Motor neuron (in vitro differentiated cells): ENCODE measurements at regions of chr12 and their contacts with region 1.

Region 1: DNA sequence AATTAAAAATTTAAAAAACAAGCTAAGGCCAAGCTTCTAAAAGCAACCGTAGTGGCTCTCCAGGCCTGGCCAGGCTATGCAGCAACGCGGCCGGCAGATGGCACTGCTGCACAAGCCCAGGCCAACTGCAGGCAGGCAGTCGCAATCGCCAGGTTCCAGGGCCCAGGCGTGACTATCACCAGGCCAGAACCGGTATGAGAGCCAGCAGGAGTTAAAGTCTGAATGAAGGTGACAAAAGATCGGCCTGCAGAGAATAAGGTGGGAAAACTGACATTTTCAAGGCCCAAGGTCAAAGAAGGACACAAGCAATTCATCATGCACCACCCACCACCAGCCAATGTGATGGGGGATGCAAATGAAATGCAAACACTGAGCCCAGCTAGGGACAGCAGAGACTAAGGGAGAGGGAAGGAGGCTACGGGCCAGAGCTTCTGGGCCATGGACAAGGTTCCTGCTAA is 43.6 kb upstream of the ANO2 start:
- ATAC-seq: peak; percentile 97 to 100 (median 99)
- H3K4me3 ChIP-seq: no peak overlapping the region
- H3K27ac ChIP-seq: no peak overlapping the region
- H3K4me1 ChIP-seq: peaks cover 0 to 9% of the 10 kb centered on the region in 2 donors

Region 2: DNA sequence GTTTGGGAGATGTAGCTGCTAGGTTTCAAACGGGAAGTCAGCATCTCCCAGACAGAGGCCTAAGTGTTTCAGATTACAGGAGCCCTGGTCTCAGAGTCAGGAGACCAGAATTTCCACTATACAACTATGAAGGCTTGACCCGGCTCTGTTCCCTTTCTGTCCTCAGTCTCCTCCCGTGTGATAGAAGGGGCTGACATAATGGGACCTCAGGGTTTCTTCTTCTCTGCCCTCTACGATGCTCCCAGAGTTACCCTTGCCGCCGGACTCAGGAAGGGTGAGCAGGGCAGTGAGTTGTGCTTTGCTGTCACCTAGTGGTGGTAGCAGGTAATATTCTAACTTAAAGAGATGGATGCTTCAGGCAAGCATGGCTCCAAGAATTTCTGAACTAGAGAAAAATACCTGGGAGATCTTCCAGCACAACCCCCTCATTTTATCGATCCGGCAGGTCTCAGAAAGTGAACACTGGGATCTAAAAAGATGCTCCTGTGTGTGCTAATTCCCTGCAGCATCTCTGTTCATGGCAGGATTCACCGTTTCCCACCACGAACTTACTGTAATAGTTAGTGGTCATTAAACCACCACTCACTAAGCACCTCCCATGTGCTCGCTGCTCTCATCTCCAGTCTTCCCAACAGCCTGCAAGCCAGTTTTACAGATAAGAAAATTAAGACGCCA is 51.3 kb after region 1 on chr12:
- in situ Hi-C with region 1: loop called in 1 of 9 experiments (anchors 10 kb)
- ATAC-seq: peak; percentile 76 to 98 (median 93)
- H3K4me3 ChIP-seq: no peak overlapping the region
- H3K27ac ChIP-seq: no peak overlapping the region
- H3K4me1 ChIP-seq: no peaks in the 10 kb centered on the region

Region 3: DNA sequence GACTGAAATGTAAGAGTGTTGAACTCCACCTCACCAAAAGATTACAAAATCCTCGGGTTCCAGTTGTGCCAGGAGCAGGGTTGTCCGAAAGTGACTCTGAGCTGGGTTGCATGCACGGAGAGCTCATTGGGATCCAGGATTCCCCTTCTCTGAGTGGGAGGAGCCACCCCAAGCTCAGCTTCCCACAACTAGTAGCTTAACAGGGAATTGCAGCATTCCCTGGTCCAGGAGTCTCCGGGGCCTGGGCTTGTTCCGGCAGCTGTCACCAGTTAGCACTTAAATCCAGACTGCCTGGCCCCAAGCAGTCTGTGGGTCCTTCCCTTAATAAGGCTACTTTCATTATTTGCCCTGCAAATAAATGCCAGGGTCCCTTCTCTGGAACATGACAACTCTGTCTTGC is 261.7 kb after region 1 on chr12:
- in situ Hi-C with region 1: no loop called
- ATAC-seq: peak in 1 of 8 experiments; percentile 20
- H3K4me3 ChIP-seq: no peak overlapping the region
- H3K27ac ChIP-seq: no peak overlapping the region
- H3K4me1 ChIP-seq: no peaks in the 10 kb centered on the region

Region 4: GRCh38 chr12:6745741-6746525 is 757.2 kb after region 1 on chr12:
- in situ Hi-C with region 1: no loop called
- ATAC-seq: peak in 5 of 8 experiments; percentile 6 to 21 (median 18)
- H3K4me3 ChIP-seq: no peak overlapping the region
- H3K27ac ChIP-seq: no peak overlapping the region
- H3K4me1 ChIP-seq: peaks cover 6 to 8% of the 10 kb centered on the region in 2 donors